MCF 10A (cell line): ENCODE measurements at regions of chr20 and their contacts with region 1.

Region 1: DNA sequence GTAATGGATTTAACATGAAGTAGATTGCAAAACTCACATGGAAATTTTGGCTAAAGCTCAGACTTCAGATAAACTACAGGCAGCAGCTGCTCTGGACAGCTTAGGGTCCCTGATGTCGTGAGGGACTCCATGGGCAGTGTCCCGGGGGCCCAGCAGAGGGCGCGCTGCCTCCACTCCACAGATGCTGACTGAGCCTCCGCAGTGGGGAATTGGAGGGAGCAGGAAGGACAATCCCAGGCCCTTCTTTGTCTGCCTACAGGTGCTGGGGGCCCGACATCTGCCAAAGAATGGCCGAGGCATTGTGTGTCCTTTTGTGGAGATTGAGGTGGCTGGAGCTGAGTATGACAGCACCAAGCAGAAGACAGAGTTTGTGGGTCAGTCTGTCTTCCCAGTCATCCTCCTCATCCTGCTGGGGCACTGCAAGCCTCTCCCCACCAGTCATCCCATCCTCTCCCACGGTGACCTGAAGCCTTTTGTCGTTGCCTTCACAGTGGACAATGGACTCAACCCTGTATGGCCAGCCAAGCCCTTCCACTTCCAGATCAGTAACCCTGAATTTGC is 35.9 kb downstream of the PLCG1 start:
- DNase-seq: peak; percentile 72
- H3K4me3 Mint-ChIP-seq: no peak overlapping the region
- H3K27ac Mint-ChIP-seq: peak overlapping the region; percentile 59
- H3K4me1 Mint-ChIP-seq: peaks cover 27% of the 10 kb centered on the region
- H3K27me3 Mint-ChIP-seq: no peaks in the 10 kb centered on the region
- CTCF ChIP-seq: peak; percentile 97

Region 2: GRCh38 chr20:41136680-41137613 is 36.3 kb before region 1 on chr20 and contains the start of gene PLCG1:
- CTCF ChIA-PET with region 1: interaction called, 30 read pairs
- POLR2A ChIA-PET with region 1: interaction called, 14 read pairs
- intact Hi-C with region 1: no loop called
- DNase-seq: peak; percentile 83
- H3K4me3 Mint-ChIP-seq: peak within 1 kb of the TSS; percentile 79
- H3K27ac Mint-ChIP-seq: peak within 1 kb of the TSS; percentile 42
- H3K4me1 Mint-ChIP-seq: peaks cover 61% of the 10 kb centered on the region
- H3K27me3 Mint-ChIP-seq: no peaks in the 10 kb centered on the region
- CTCF ChIP-seq: no peak
- total RNA-seq, gene PLCG1: 33.2 and 48.1 TPM in 2 replicates

Region 3: GRCh38 chr20:41200446-41201202 is 27.4 kb after region 1 on chr20:
- CTCF ChIA-PET with region 1: interaction called, 13 read pairs
- POLR2A ChIA-PET with region 1: interaction called, 3 read pairs
- intact Hi-C with region 1: no loop called
- DNase-seq: no peak
- H3K4me3 Mint-ChIP-seq: no peak overlapping the region
- H3K27ac Mint-ChIP-seq: no peak overlapping the region
- H3K4me1 Mint-ChIP-seq: no peaks in the 10 kb centered on the region
- H3K27me3 Mint-ChIP-seq: no peaks in the 10 kb centered on the region
- CTCF ChIP-seq: no peak

Region 4: DNA sequence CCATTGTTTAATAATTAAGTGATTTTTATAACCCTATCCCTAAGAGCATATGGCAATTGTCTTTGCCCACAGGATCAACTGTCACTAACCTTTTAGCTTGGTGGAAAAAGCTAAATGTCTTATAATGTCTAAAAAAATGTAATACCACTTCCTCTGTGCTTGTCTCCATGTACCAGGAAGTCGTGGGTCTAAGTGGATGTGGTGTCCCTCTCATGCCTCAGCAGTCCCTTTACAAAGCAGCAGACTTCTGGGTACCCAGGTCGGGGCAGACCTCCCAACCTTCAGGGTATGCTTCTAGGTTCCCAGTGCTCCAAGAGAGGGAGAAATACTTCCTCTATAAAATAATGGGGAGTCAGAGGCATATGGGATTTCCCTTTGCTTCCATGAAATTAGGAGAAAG is 69.6 kb after region 1 on chr20:
- CTCF ChIA-PET with region 1: interaction called, 17 read pairs
- POLR2A ChIA-PET with region 1: no interaction called
- intact Hi-C with region 1: no loop called
- DNase-seq: no peak
- H3K4me3 Mint-ChIP-seq: no peak overlapping the region
- H3K27ac Mint-ChIP-seq: no peak overlapping the region
- H3K4me1 Mint-ChIP-seq: peaks cover 17% of the 10 kb centered on the region
- H3K27me3 Mint-ChIP-seq: no peaks in the 10 kb centered on the region
- CTCF ChIP-seq: no peak

Region 5: GRCh38 chr20:41329435-41330342 is 156.4 kb after region 1 on chr20:
- CTCF ChIA-PET with region 1: interaction called, 16 read pairs
- POLR2A ChIA-PET with region 1: interaction called, 7 read pairs
- intact Hi-C with region 1: no loop called
- DNase-seq: peak; percentile 92
- H3K4me3 Mint-ChIP-seq: peak overlapping the region; percentile 28
- H3K27ac Mint-ChIP-seq: peak overlapping the region; percentile 89
- H3K4me1 Mint-ChIP-seq: peaks cover 15% of the 10 kb centered on the region
- H3K27me3 Mint-ChIP-seq: no peaks in the 10 kb centered on the region
- CTCF ChIP-seq: no peak